ENCODE measurements at regions of chr12 and their contacts with region 1.

Region 1: GRCh38 chr12:1474041-1474573 is 120.3 kb downstream of the FBXL14 start:
- DNase-seq: peak; percentile 21
- H3K4me3 Mint-ChIP-seq: no peak overlapping the region
- H3K27ac Mint-ChIP-seq: no peak overlapping the region
- H3K4me1 Mint-ChIP-seq: peaks cover 10% of the 10 kb centered on the region
- H3K27me3 Mint-ChIP-seq: no peaks in the 10 kb centered on the region

Region 2: GRCh38 chr12:1130164-1130563 is 343.9 kb before region 1 on chr12:
- intact Hi-C with region 1: loop called (anchors 10 kb)
- DNase-seq: no peak
- H3K4me3 Mint-ChIP-seq: no peak overlapping the region
- H3K27ac Mint-ChIP-seq: no peak overlapping the region
- H3K4me1 Mint-ChIP-seq: peaks cover 30% of the 10 kb centered on the region
- H3K27me3 Mint-ChIP-seq: peaks cover 1% of the 10 kb centered on the region

Measured in activated T-helper 2 cell treated with anti-CD3 and anti-CD28 coated beads, Interferon-gamma antibody, Interleukin-2, Interleukin-4, amounts not matched to agents 10 μg/mL and 5 μg/mL and 100 μg/mL, durations not matched to agents 14 hours and 24 hours and 36 hours (primary cell).